Mammary epithelial cell (primary cell): ENCODE measurements at regions of chr3 and their contacts with region 1.

Region 1: GRCh38 chr3:49053543-49053942 is 24.3 kb upstream of the IMPDH2 start:
- DNase-seq: no peak
- H3K4me3 ChIP-seq: no peak overlapping the region
- H3K27ac ChIP-seq: no peak overlapping the region
- H3K4me1 ChIP-seq: no peaks in the 10 kb centered on the region
- H3K27me3 ChIP-seq: no peaks in the 10 kb centered on the region
- CTCF ChIP-seq: no peak

Region 2: GRCh38 chr3:48820612-48821324 is 232.8 kb before region 1 on chr3:
- CTCF ChIA-PET with region 1: no interaction called
- dilution Hi-C with region 1: no loop called
- in situ Hi-C with region 1: no loop called
- intact Hi-C with region 1: no loop called
- DNase-seq: no peak
- H3K4me3 ChIP-seq: no peak overlapping the region
- H3K27ac ChIP-seq: no peak overlapping the region
- H3K4me1 ChIP-seq: peaks cover 6% of the 10 kb centered on the region
- H3K27me3 ChIP-seq: no peaks in the 10 kb centered on the region
- CTCF ChIP-seq: no peak

Region 3: DNA sequence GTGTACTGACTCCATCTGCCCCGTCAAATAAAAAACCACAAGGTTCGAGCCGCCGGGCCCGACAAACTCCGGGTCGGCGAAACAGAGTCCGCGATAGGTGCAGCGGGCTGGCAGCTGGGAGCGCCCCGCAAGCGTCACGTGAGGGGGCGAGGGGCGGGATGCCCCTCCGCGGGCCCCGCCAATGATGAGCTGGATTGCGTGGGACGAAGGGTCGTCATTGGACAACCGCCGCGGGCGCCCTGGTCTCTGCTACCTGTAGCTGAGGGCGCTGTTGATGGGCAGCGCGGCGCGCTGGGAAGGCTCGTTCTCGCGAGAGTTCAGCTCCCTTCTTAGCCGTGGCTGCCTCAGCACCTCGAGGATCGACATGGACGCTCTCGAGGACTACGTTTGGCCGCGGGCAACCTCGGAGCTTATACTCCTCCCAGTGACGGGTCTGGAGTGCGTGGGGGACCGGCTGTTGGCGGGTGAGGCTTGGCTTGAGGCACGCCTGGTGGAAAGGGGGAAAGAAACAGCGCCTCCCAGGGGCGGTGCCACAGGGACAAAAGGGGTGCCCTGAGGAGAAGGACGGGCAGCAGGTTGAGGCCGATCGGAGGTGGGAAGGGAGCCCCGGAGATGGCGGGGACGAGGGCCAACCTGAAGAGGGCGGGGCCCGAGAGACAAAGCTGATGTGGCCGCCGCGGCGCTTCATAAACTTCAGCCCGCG is 46.3 kb before region 1 on chr3 and contains the start of gene WDR6:
- CTCF ChIA-PET with region 1: no interaction called
- dilution Hi-C with region 1: no loop called
- in situ Hi-C with region 1: no loop called
- intact Hi-C with region 1: no loop called
- DNase-seq: peak; percentile 98
- H3K4me3 ChIP-seq: peak within 1 kb of the TSS; percentile 56 to 84 (median 76)
- H3K27ac ChIP-seq: peak within 1 kb of the TSS; percentile 67
- H3K4me1 ChIP-seq: peaks cover 15% of the 10 kb centered on the region
- H3K27me3 ChIP-seq: no peaks in the 10 kb centered on the region
- CTCF ChIP-seq: peak; percentile 18 to 53
- total RNA-seq, gene WDR6: 91.2 to 108 TPM

Region 4: GRCh38 chr3:49081429-49081828 is 27.9 kb after region 1 on chr3:
- CTCF ChIA-PET with region 1: no interaction called
- dilution Hi-C with region 1: loop called (anchors 5 kb)
- in situ Hi-C with region 1: no loop called
- intact Hi-C with region 1: no loop called
- DNase-seq: peak; percentile 41
- H3K4me3 ChIP-seq: no peak overlapping the region
- H3K27ac ChIP-seq: no peak overlapping the region
- H3K4me1 ChIP-seq: peaks cover 4% of the 10 kb centered on the region
- H3K27me3 ChIP-seq: no peaks in the 10 kb centered on the region
- CTCF ChIP-seq: no peak